HEK293T (cell line): ENCODE measurements at regions of chr1 and their contacts with region 1.

Region 1: GRCh38 chr1:48082271-48082962 is 85.2 kb upstream of the TRABD2B start:
- DNase-seq: peak; percentile 27

Region 2: GRCh38 chr1:48019714-48020315 is 62.6 kb before region 1 on chr1:
- CTCF ChIA-PET with region 1: no interaction called
- POLR2A ChIA-PET with region 1: no interaction called
- DNase-seq: no peak

Region 3: DNA sequence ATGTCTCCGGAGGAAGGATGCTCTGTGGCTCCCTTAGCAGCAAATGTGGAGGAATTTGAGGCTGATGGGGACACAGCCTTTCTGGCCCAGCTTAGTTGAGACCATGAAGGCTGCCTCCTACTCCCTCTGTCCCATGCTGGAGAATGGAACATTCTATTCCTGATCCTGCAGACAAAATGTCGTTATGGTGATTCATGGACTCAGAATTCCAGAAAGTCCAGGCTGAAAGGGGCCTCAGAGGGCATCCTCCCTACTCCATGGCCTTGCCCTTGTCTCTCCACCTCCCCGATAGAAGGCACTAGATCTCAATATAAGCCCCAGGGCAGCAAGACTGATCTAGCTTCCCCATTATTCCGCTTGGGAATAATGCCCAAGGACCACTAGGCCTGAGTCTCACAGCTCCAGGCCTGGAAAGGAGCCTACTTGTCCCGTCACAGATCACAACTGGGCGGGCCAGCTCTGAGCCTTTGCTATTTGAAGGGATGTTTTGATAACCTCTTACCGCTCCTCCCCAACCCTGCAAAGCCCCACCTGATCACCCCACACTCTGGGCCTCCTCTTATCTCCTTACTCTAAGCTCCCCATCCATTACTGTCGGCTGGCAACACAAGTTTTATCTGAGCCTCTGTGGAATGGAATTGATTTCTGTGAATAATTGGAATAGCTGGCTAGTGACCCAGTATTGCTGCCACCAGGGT is 32.4 kb before region 1 on chr1:
- CTCF ChIA-PET with region 1: no interaction called
- POLR2A ChIA-PET with region 1: no interaction called
- DNase-seq: no peak

Region 4: DNA sequence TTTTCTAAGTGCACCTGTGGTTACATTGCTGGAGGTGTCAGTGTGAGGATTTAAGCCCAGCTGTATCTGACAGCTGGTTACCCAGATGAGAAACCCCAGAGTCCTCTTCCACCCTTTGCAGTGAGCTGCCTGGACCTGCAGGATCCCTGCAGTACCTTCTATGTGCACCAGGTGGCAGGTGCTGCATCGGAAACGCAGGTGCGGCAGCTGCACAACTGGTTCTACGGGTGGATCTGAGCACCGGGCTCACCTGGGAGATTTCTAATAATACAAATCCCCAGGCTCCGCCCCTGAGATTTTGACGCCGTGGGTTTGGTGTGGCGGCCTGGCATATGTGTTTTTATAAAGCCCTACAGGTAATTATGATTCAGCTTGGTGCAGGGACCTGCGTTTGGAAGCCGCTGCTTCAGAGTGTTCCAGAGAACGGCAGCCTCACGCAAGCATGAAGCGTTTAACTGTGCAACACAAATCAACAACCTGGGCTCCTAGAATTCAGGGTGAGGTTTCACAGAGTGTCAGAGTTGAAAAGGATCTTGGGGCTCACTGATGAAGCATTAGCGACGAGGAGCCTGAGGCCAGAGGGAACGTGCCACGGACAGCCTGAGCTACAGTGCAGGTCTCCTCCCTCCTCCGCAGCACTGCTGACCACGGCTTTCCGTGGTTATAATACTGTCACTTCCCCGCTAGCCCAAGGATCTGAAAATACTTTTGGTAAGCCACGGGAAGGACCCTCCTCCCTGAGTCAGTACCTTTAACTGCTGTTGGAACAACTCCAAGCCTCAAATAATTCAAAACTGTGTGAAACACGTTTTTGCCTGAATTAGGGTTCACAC is 11.5 kb after region 1 on chr1:
- CTCF ChIA-PET with region 1: interaction called, 14 read pairs
- POLR2A ChIA-PET with region 1: no interaction called
- DNase-seq: peak; percentile 85